Esophagus muscularis mucosa (tissue), 4 donors: ENCODE measurements at regions of chr9 and their contacts with region 1.

Region 1: DNA sequence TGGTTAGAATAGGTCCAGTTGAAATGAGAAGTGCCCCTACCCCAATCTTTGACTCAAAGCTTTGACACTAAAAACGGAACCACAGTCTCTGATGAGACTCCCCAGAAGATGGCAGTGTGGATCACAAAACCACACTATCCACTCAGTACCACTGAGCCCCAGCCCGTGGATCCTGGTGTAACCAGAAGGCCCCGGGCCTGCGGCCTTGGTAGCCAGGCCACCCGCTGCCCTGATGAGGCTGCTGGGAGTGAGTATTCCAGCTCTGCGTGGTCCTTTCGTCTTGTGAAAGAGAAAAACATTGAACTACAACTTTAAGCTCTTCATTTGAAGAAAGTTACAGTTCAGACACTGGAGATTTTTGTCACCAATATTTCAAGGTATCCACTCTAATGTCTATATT is 42.2 kb upstream of the FBP1 start:
- DNase-seq: peak; percentile 93
- H3K4me3 ChIP-seq: no peak overlapping the region
- H3K27ac ChIP-seq: peak overlapping the region in 2 of 4 donors; percentile 20 to 37
- H3K4me1 ChIP-seq: peaks cover 5 to 9% (median 7%) of the 10 kb centered on the region in 4 donors
- H3K27me3 ChIP-seq: no peaks in the 10 kb centered on the region
- CTCF ChIP-seq: peak; percentile 72 to 76 (median 75)
- EP300 ChIP-seq: no peak
- POLR2A ChIP-seq: no peak

Region 2: GRCh38 chr9:94511904-94512265 is 169.6 kb before region 1 on chr9:
- intact Hi-C with region 1: no loop called
- DNase-seq: no peak
- H3K4me3 ChIP-seq: no peak overlapping the region
- H3K27ac ChIP-seq: no peak overlapping the region
- H3K4me1 ChIP-seq: no peaks in the 10 kb centered on the region
- H3K27me3 ChIP-seq: no peaks in the 10 kb centered on the region
- CTCF ChIP-seq: no peak
- EP300 ChIP-seq: no peak
- POLR2A ChIP-seq: no peak

Region 3: GRCh38 chr9:94649100-94649819 is 32.2 kb before region 1 on chr9:
- intact Hi-C with region 1: no loop called
- DNase-seq: no peak
- H3K4me3 ChIP-seq: no peak overlapping the region
- H3K27ac ChIP-seq: no peak overlapping the region
- H3K4me1 ChIP-seq: peaks cover 0 to 5% (median 0%) of the 10 kb centered on the region in 4 donors
- H3K27me3 ChIP-seq: no peaks in the 10 kb centered on the region
- CTCF ChIP-seq: no peak
- EP300 ChIP-seq: no peak
- POLR2A ChIP-seq: no peak

Region 4: GRCh38 chr9:94785215-94786169 is 104.0 kb after region 1 on chr9:
- intact Hi-C with region 1: no loop called
- DNase-seq: no peak
- H3K4me3 ChIP-seq: no peak overlapping the region
- H3K27ac ChIP-seq: no peak overlapping the region
- H3K4me1 ChIP-seq: peaks cover 9 to 16% (median 12%) of the 10 kb centered on the region in 4 donors
- H3K27me3 ChIP-seq: no peaks in the 10 kb centered on the region
- CTCF ChIP-seq: no peak
- EP300 ChIP-seq: no peak
- POLR2A ChIP-seq: no peak

Region 5: GRCh38 chr9:94812343-94812742 is 130.8 kb after region 1 on chr9:
- intact Hi-C with region 1: no loop called
- DNase-seq: no peak
- H3K4me3 ChIP-seq: no peak overlapping the region
- H3K27ac ChIP-seq: no peak overlapping the region
- H3K4me1 ChIP-seq: peaks cover 15 to 30% (median 28%) of the 10 kb centered on the region in 4 donors
- H3K27me3 ChIP-seq: no peaks in the 10 kb centered on the region
- CTCF ChIP-seq: no peak
- EP300 ChIP-seq: no peak
- POLR2A ChIP-seq: no peak

Region 6: GRCh38 chr9:95127249-95128176 is 446.0 kb after region 1 on chr9:
- intact Hi-C with region 1: loop called (anchors 2 kb)
- DNase-seq: no peak
- H3K4me3 ChIP-seq: peak overlapping the region; percentile 41 to 55 (median 50)
- H3K27ac ChIP-seq: peak overlapping the region; percentile 29 to 61 (median 46)
- H3K4me1 ChIP-seq: peaks cover 6 to 46% (median 41%) of the 10 kb centered on the region in 4 donors
- H3K27me3 ChIP-seq: no peaks in the 10 kb centered on the region
- CTCF ChIP-seq: peak; percentile 92 to 98 (median 98)
- EP300 ChIP-seq: no peak
- POLR2A ChIP-seq: no peak